PC-9 (cell line): ENCODE measurements at regions of chr5 and their contacts with region 1.

Region 1: DNA sequence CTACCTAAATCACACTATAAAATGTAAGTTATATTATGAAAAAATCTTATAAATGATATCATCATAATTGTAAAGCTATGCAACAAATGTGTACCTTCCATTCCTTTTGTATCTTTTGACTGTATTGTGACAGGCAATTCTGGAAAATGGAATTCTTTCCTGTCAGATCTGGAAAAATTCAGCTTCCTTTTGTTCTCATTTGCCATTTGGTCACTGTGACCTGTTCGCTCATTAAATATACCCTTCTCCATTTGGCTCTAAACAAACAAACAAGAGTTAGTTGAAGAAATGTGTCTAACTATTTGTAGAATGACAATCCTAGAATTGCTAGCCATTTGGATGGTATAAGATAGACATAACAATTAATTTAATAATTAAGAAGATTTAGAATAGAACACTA is 62.7 kb downstream of the CDKL3 start:
- DNase-seq: no peak
- H3K4me3 ChIP-seq: no peak overlapping the region
- H3K27ac ChIP-seq: no peak overlapping the region
- H3K4me1 ChIP-seq: no peaks in the 10 kb centered on the region
- H3K27me3 ChIP-seq: no peaks in the 10 kb centered on the region
- CTCF ChIP-seq: no peak

Region 2: DNA sequence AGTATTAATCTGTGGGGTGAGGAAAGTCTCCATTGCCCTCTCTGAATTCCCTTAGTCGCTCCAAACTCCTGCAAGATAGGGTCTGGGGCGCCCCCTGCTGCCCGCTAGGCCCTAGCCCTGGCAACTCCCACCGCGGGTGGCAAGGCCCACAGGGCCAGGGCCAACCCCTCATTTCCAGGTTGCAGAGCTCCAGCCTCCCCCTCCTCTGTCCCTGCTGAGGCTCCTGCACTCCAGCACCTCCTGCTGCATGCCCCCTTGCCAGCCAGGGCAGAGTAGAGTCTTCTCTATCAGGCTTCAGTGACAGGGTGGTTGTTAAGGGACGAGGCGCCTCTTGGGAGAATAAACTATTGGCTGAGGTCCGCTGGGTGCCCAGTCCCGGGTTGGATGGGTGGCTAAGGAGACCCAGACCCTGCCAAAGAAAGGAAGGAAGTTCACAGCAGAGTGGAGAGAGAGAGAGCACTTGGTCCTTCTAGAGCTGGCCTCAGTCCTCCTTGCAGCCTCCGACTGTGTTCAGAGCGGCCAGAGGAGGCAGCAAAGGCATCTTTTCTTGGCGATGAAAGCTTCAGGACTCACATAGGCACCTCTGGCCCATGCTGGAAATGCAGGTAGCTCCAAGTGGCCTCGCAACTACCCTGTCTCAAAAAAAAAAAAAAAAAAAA is 282.7 kb after region 1 on chr5:
- CTCF ChIA-PET with region 1: no interaction called
- POLR2A ChIA-PET with region 1: no interaction called
- intact Hi-C with region 1: loop called (anchors 2 kb)
- DNase-seq: peak; percentile 77 to 80
- H3K4me3 ChIP-seq: no peak overlapping the region
- H3K27ac ChIP-seq: no peak overlapping the region
- H3K4me1 ChIP-seq: peaks cover 19% of the 10 kb centered on the region
- H3K27me3 ChIP-seq: no peaks in the 10 kb centered on the region
- CTCF ChIP-seq: peak; percentile 86